Caco-2 (cell line): ENCODE measurements at regions of chr10 and their contacts with region 1.

Region 1: GRCh38 chr10:60237977-60238758 is 151.5 kb downstream of the ANK3 start:
- DNase-seq: peak; percentile 68 to 78
- H3K4me3 ChIP-seq: no peak overlapping the region
- H3K4me3 Mint-ChIP-seq: no peak overlapping the region
- H3K27ac Mint-ChIP-seq: no peak overlapping the region
- H3K4me1 ChIP-seq: no peaks in the 10 kb centered on the region; the same call in 1 of the 2 replicates
- H3K4me1 Mint-ChIP-seq: peaks cover 16% of the 10 kb centered on the region
- H3K27me3 ChIP-seq: no peaks in the 10 kb centered on the region
- H3K27me3 Mint-ChIP-seq: no peaks in the 10 kb centered on the region
- CTCF ChIP-seq: peak; percentile 63 to 91

Region 2: GRCh38 chr10:60282771-60283353 is 44.7 kb after region 1 on chr10:
- CTCF ChIA-PET with region 1: no interaction called
- POLR2A ChIA-PET with region 1: no interaction called
- intact Hi-C with region 1: loop called (anchors 5 kb)
- DNase-seq: peak in 1 of 2 experiments; percentile 68
- H3K4me3 ChIP-seq: no peak overlapping the region
- H3K4me3 Mint-ChIP-seq: peak overlapping the region; percentile 33
- H3K27ac Mint-ChIP-seq: peak overlapping the region; percentile 68
- H3K4me1 ChIP-seq: peaks cover 42% of the 10 kb centered on the region
- H3K4me1 Mint-ChIP-seq: peaks cover 35% of the 10 kb centered on the region
- H3K27me3 ChIP-seq: no peaks in the 10 kb centered on the region
- H3K27me3 Mint-ChIP-seq: no peaks in the 10 kb centered on the region
- CTCF ChIP-seq: no peak

Region 3: GRCh38 chr10:60335708-60336107 is 97.5 kb after region 1 on chr10:
- CTCF ChIA-PET with region 1: interaction called, 5 read pairs
- POLR2A ChIA-PET with region 1: no interaction called
- intact Hi-C with region 1: loop called (anchors 1 kb)
- DNase-seq: peak in 1 of 2 experiments; percentile 40
- H3K4me3 ChIP-seq: no peak overlapping the region
- H3K4me3 Mint-ChIP-seq: no peak overlapping the region
- H3K27ac Mint-ChIP-seq: no peak overlapping the region
- H3K4me1 ChIP-seq: 0 out of 2 replicates have a peak, but pooled peaks cover 5% of the 10 kb centered on the region
- H3K4me1 Mint-ChIP-seq: peaks cover 16% of the 10 kb centered on the region
- H3K27me3 ChIP-seq: no peaks in the 10 kb centered on the region
- H3K27me3 Mint-ChIP-seq: no peaks in the 10 kb centered on the region
- CTCF ChIP-seq: peak; percentile 62 to 70

Region 4: DNA sequence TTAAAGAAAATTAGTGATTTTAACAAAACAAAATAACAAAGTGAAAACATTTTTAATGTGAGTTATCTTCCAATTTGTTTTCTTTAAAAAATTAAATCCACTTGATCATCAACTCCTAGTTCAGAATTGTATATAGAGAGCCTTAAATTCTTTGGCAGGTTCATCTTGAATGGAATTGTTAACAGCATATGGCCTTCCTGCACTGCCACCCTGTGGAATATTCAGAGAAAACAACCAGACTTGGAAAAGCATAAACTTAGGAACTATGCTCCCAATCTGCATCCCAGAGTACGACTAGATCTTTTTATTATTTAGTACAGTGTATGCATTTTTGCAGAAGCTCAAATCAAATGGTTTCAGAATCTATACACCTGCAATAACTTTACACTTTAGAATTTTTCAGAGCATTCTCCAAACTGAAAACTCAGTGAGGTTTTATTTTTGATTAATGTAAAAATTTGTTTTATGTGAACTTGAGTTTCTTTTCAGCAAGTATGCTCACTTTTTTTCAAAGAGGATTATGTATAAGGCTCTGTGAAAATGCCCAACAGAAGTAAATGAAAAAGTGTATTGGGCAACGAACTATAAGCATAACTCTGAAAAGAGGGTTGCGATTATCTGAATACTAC is 196.4 kb after region 1 on chr10:
- CTCF ChIA-PET with region 1: interaction called, 5 read pairs
- POLR2A ChIA-PET with region 1: no interaction called
- intact Hi-C with region 1: loop called (anchors 1 kb)
- DNase-seq: peak; percentile 55 to 76
- H3K4me3 ChIP-seq: no peak overlapping the region
- H3K4me3 Mint-ChIP-seq: no peak overlapping the region
- H3K27ac Mint-ChIP-seq: no peak overlapping the region
- H3K4me1 ChIP-seq: no peaks in the 10 kb centered on the region
- H3K4me1 Mint-ChIP-seq: no peaks in the 10 kb centered on the region
- H3K27me3 ChIP-seq: no peaks in the 10 kb centered on the region
- H3K27me3 Mint-ChIP-seq: no peaks in the 10 kb centered on the region
- CTCF ChIP-seq: peak; percentile 84 to 90

Region 5: DNA sequence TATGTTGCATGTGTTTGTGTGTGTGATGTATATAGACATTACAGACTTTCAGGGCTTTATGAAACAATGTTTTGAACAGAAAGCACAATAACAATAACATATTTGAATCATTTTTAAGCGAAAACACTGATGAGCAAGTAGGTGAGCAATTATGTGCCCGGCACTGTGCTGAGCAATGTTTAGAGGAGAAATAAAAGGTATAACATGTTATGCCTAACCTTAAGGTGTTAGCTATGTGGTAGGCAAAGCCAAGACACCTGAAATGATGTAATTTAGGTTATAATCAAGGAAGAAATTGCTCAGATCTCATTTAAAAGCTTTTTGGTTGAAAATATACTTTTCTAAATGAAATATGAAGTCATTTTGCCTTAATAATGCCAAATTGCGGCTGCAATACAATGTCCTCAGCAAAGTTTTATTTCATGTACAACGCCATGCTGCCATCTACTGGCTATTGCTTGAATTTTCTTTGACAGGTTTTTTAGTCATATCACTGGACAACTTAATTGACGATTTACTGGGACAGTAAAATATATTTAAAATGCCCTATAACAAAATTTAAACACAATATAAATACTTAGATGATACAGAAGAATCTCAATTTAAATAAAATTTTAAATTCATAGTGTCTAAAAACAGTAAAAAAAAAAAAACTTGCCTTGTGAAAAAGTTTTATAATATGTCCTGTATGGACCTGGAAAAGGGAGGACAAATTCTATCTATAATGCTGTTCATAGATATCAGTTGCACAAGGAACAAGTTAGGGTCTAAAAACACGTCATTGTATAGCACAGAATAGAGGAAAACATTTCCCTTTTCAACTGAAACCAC is 409.0 kb after region 1 on chr10:
- CTCF ChIA-PET with region 1: interaction called, 4 read pairs
- POLR2A ChIA-PET with region 1: no interaction called
- intact Hi-C with region 1: loop called (anchors 5 kb)
- DNase-seq: peak; percentile 52 to 77
- H3K4me3 ChIP-seq: no peak overlapping the region
- H3K4me3 Mint-ChIP-seq: no peak overlapping the region
- H3K27ac Mint-ChIP-seq: no peak overlapping the region
- H3K4me1 ChIP-seq: peaks cover 39% of the 10 kb centered on the region
- H3K4me1 Mint-ChIP-seq: peaks cover 35% of the 10 kb centered on the region
- H3K27me3 ChIP-seq: no peaks in the 10 kb centered on the region
- H3K27me3 Mint-ChIP-seq: no peaks in the 10 kb centered on the region
- CTCF ChIP-seq: peak; percentile 82 to 97

Region 6: GRCh38 chr10:60778214-60779029 is 540.3 kb after region 1 on chr10 and contains the start of gene CDK1:
- CTCF ChIA-PET with region 1: no interaction called
- POLR2A ChIA-PET with region 1: no interaction called
- intact Hi-C with region 1: loop called (anchors 10 kb)
- DNase-seq: peak; percentile 100
- H3K4me3 ChIP-seq: peak within 1 kb of the TSS; percentile 92
- H3K4me3 Mint-ChIP-seq: peak within 1 kb of the TSS; percentile 92
- H3K27ac Mint-ChIP-seq: peak within 1 kb of the TSS; percentile 96
- H3K4me1 ChIP-seq: peaks cover 22% of the 10 kb centered on the region
- H3K4me1 Mint-ChIP-seq: peaks cover 24% of the 10 kb centered on the region
- H3K27me3 ChIP-seq: no peaks in the 10 kb centered on the region
- H3K27me3 Mint-ChIP-seq: no peaks in the 10 kb centered on the region
- CTCF ChIP-seq: no peak
- total RNA-seq, gene CDK1: 193 and 199 TPM in 2 replicates